ENCODE measurements at regions of chr17 and their contacts with region 1.

Region 1: DNA sequence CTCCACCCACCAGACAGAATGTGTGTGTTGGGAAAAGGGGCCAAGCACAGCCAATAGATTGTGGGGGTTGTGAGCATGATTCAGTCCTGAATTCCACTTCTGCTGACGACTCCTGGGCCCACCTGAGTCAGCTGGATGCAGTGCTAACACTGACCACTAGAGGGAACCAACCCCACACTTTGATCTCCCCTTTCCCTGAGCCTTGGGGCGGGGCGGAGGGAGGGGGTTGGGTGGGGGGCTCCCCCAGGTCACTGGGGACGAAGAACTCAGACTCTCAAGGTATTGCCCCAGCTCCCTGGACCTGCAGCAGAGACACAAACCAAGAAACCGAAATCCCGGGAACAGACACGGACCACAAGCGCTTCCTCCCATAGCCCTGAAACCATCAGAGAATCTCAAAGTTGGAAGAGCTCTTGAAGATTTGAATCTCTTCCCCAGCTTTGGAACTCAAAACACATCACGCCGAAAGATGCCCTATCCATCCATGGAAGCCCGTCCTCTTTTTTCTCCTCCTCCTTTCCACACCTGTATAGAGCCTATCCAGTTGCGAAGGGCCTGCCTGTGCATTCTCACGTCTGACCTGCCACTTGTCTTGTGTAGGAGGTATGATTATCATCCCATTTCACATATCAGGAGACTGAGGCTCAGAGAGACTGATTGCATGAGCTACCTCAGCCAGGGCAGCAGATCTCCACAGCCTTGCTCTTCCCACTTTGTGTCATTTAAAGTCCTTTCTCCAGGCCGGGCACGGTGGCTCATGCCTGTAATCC is 784 bp upstream of the CSHL1 start:
- DNase-seq: peak; percentile 88
- H3K4me3 ChIP-seq: no peak overlapping the region
- H3K27ac ChIP-seq: no peak overlapping the region
- H3K4me1 ChIP-seq: no peaks in the 10 kb centered on the region; a peak in 1 of 4 replicates
- H3K27me3 ChIP-seq: peaks cover 45% of the 10 kb centered on the region
- CTCF ChIP-seq: peak; percentile 70
- EP300 ChIP-seq: no peak
- RAD21 ChIP-seq: peak; percentile 62

Region 2: DNA sequence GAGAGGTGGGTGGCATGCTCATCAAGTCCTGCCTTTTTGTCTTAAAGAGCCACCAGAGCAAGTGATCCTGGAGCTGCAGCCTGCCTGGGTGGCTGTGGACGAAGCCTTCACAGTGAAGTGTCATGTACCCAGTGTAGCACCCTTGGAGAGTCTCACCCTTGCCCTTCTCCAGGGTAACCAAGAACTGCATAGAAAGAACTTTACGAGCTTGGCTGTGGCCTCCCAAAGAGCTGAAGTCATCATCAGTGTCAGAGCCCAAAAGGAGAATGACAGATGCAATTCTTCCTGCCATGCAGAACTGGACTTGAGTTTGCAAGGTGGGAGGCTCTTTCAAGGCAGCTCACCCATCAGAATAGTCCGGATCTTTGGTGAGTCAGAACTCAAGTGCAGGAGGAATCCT is 52.6 kb before region 1 on chr17:
- CTCF ChIA-PET with region 1: interaction called, 32 read pairs
- POLR2A ChIA-PET with region 1: no interaction called
- DNase-seq: no peak
- H3K4me3 ChIP-seq: no peak overlapping the region
- H3K27ac ChIP-seq: no peak overlapping the region
- H3K4me1 ChIP-seq: no peaks in the 10 kb centered on the region
- H3K27me3 ChIP-seq: peaks cover 31% of the 10 kb centered on the region
- CTCF ChIP-seq: no peak
- EP300 ChIP-seq: no peak
- RAD21 ChIP-seq: no peak

Region 3: DNA sequence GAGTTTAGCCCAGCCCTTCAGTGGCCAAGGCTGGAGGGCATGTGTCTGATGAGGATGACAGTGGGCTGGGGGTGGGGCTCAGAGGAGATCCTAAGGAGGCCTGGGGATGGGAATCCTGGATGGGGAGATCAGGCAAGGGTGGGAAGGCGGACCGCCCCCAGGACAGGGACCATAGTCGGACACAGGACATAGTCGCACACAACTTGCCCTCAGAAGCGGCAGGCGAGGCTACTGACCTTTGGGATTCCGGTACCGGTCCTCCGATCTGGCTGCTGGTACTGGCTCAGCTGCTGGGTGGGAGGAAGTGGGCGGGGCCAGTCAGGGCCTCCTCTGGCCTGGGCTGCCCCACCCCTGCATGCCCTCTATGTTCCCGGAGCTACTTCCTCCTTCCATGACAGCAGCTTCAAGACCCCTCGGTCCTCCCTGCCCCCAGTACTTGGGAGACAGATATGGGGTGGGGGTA is 19.3 kb after region 1 on chr17:
- CTCF ChIA-PET with region 1: interaction called, 90 read pairs
- POLR2A ChIA-PET with region 1: no interaction called
- DNase-seq: peak; percentile 50
- H3K4me3 ChIP-seq: no peak overlapping the region
- H3K27ac ChIP-seq: no peak overlapping the region
- H3K4me1 ChIP-seq: no peaks in the 10 kb centered on the region
- H3K27me3 ChIP-seq: peaks cover 13% of the 10 kb centered on the region; the same call in 1 of the 2 replicates
- CTCF ChIP-seq: no peak
- EP300 ChIP-seq: no peak
- RAD21 ChIP-seq: no peak

Region 4: DNA sequence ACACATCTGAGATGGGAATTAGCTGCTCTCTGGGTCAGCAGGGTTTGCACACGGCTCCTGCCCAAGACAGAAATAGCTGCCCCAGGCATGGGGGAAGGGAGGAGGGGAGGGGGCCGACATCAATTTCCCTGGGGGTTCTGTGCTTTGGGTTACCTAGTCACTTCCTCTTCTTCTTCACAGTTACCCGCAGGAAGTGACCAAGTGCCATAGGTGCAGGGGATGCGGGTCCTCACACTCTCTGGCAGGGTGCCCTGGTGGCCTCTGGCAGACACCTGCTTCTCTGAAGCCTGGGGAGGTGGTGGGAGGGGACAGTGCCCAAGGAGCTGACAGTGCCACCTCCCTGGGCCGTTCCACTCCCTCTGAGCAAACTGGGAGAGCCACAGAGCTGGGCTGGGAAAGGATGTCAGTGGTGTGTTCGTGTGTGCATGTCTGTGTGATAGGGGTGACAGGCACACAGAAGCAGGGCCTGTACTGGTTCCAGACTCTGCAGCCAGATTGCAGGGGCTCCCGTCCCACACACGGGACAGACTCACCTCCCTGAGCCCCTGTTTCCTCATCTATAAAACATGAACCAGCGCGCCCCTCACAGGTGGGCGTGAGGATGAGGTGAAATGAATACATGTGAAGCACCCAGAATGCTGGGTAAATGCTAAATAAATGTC is 42.7 kb after region 1 on chr17:
- CTCF ChIA-PET with region 1: interaction called, 63 read pairs
- POLR2A ChIA-PET with region 1: no interaction called
- DNase-seq: peak; percentile 61
- H3K4me3 ChIP-seq: no peak overlapping the region
- H3K27ac ChIP-seq: no peak overlapping the region
- H3K4me1 ChIP-seq: peaks cover 0 to 13% of the 10 kb centered on the region in 2 experiments; a peak in 1 of 4 replicates
- H3K27me3 ChIP-seq: peaks cover 6% of the 10 kb centered on the region; the same call in 1 of the 2 replicates
- CTCF ChIP-seq: no peak
- EP300 ChIP-seq: no peak
- RAD21 ChIP-seq: no peak

Region 5: DNA sequence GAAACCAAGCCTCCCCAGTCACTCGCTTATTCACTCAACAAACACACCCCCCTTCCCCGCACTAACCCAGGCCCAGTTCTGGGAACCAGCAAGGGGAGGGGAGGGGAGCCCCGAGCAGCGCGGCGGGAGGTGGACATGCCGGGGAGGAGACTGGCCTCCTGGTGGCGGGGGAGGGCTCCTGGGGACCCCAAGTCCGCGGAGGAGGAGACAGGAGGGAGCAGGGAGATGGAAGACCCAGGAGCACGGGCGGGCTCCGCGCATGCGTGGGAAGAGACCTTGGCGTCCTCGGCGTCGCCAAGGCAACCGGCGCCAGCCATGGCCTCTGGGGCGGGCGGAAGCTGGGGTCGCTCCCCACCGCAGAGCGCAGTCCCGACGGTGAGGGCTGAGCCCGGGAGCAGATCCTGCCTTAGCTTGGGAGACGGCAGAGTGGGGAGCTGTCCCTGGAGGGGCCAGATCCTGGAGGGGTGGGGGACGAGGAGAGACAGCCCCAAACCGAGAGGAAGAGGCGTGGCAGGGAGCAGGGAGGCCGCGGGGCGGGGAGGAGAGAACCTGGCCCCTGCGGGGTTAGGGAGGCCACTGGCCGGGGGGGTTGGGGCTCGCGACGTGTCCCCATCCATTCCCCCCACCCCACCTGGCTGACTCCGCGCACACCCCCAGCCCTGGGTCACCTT is 86.3 kb after region 1 on chr17 and contains the start of gene PRR29:
- CTCF ChIA-PET with region 1: interaction called, 17 read pairs
- POLR2A ChIA-PET with region 1: no interaction called
- DNase-seq: peak; percentile 100
- H3K4me3 ChIP-seq: peak within 1 kb of the TSS; percentile 71 to 94
- H3K27ac ChIP-seq: peak within 1 kb of the TSS in 1 of 2 experiments; percentile 50; a peak in 1 of 4 replicates
- H3K4me1 ChIP-seq: peaks cover 0 to 13% of the 10 kb centered on the region in 2 experiments; a peak in 2 of 4 replicates
- H3K27me3 ChIP-seq: peaks cover 23% of the 10 kb centered on the region
- CTCF ChIP-seq: no peak
- EP300 ChIP-seq: no peak
- RAD21 ChIP-seq: no peak
- polyA plus RNA-seq, gene PRR29: 2.5 and 2.7 TPM in 2 replicates

Region 6: GRCh38 chr17:64095144-64095882 is 183.5 kb after region 1 on chr17:
- CTCF ChIA-PET with region 1: no interaction called
- POLR2A ChIA-PET with region 1: no interaction called
- DNase-seq: no peak
- H3K4me3 ChIP-seq: no peak overlapping the region
- H3K27ac ChIP-seq: no peak overlapping the region
- H3K4me1 ChIP-seq: no peaks in the 10 kb centered on the region; a peak in 1 of 4 replicates
- H3K27me3 ChIP-seq: no peaks in the 10 kb centered on the region
- CTCF ChIP-seq: no peak
- EP300 ChIP-seq: no peak
- RAD21 ChIP-seq: no peak

Region 7: GRCh38 chr17:64281962-64282727 is 370.3 kb after region 1 on chr17:
- CTCF ChIA-PET with region 1: interaction called, 10 read pairs
- POLR2A ChIA-PET with region 1: interaction called, 5 read pairs
- DNase-seq: peak; percentile 80
- H3K4me3 ChIP-seq: no peak overlapping the region
- H3K27ac ChIP-seq: no peak overlapping the region
- H3K4me1 ChIP-seq: peaks cover 0 to 3% of the 10 kb centered on the region in 2 experiments; a peak in 1 of 4 replicates
- H3K27me3 ChIP-seq: no peaks in the 10 kb centered on the region
- CTCF ChIP-seq: peak; percentile 99
- EP300 ChIP-seq: no peak
- RAD21 ChIP-seq: peak; percentile 100

Measured in SK-N-SH (cell line).